MCF 10A (cell line): ENCODE measurements at regions of chr12 and their contacts with region 1.

Region 1: GRCh38 chr12:57904848-57905811 is 36.2 kb upstream of the ATP23 start:
- DNase-seq: peak; percentile 90
- H3K4me3 Mint-ChIP-seq: no peak overlapping the region
- H3K27ac Mint-ChIP-seq: no peak overlapping the region
- H3K4me1 Mint-ChIP-seq: peaks cover 8% of the 10 kb centered on the region
- H3K27me3 Mint-ChIP-seq: peaks cover 26% of the 10 kb centered on the region
- CTCF ChIP-seq: peak; percentile 100

Region 2: DNA sequence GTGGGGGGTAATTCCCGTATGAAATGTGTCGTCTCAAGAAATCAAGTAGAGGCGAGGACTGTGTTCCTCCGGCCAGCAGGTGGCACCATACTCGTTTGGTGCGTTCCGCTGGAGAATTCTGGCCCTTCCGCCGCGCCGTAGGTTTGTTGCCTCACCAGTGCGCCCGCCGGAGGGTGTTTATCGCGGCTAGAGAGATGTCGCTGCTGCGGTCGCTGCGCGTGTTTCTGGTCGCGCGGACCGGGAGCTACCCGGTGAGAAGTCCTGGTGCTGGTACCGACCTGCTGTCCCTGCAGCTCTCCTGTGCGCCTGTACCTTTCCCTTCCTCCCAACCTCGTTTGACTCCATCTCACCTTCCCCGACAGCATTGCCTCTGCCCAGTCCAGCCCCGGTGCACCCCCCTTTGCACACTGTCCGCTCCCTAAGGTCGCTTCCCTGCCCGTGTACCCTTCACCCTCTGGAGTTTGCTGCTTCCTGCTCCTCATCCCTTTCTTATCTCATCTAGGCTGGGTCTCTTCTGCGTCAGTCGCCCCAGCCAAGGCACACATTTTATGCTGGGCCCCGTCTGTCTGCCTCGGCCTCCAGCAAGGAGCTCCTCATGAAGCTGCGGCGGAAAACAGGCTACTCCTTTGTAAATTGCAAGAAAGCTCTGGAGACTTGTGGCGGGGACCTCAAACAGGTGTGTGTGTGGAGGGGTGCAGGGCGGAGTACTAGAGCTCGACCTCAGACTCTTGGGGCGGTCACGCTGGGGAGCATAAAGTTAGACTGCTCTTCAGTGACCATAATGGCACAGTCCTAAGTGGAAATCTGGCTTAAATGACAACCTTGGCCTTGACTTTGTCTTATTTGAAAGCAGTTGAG is 122.3 kb before region 1 on chr12 and contains the start of gene TSFM:
- CTCF ChIA-PET with region 1: interaction called, 6 read pairs
- POLR2A ChIA-PET with region 1: interaction called, 3 read pairs
- intact Hi-C with region 1: loop called (anchors 1 kb)
- DNase-seq: peak; percentile 95
- H3K4me3 Mint-ChIP-seq: peak within 1 kb of the TSS; percentile 98
- H3K27ac Mint-ChIP-seq: peak within 1 kb of the TSS; percentile 86
- H3K4me1 Mint-ChIP-seq: peaks cover 25% of the 10 kb centered on the region
- H3K27me3 Mint-ChIP-seq: no peaks in the 10 kb centered on the region
- CTCF ChIP-seq: peak; percentile 90
- total RNA-seq, gene TSFM: 28.4 and 32.6 TPM in 2 replicates

Region 3: DNA sequence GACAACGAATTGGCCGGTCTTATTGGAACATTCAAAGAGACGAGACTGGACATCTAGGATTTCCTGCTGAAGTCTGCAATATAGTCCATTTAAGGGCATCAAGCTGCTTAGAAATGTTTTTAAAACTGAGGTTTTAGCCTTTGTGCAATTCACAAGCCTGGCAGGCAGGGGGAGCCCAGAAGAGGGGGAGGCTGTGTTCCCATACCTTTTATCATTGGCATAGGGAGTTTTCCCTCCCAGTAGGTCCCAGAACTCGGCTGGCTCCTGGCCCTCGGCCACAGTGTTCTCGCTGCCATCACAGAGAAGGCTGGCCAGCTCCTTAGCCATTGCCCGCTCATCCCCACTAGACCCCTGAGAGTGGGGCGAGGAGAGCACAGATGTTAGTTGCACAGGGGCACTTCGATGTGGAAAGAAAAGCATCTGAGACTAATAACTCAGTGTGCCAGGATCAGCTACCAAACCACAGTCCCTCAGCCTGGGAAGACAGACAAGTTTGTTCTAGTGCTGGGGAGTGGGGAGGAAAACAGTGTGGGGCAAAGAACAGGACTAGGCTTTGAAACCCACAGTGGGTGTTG is 101.7 kb before region 1 on chr12:
- CTCF ChIA-PET with region 1: interaction called, 28 read pairs
- POLR2A ChIA-PET with region 1: interaction called, 5 read pairs
- intact Hi-C with region 1: loop called (anchors 1 kb)
- DNase-seq: peak; percentile 61
- H3K4me3 Mint-ChIP-seq: no peak overlapping the region
- H3K27ac Mint-ChIP-seq: no peak overlapping the region
- H3K4me1 Mint-ChIP-seq: no peaks in the 10 kb centered on the region
- H3K27me3 Mint-ChIP-seq: no peaks in the 10 kb centered on the region
- CTCF ChIP-seq: peak; percentile 84

Region 4: DNA sequence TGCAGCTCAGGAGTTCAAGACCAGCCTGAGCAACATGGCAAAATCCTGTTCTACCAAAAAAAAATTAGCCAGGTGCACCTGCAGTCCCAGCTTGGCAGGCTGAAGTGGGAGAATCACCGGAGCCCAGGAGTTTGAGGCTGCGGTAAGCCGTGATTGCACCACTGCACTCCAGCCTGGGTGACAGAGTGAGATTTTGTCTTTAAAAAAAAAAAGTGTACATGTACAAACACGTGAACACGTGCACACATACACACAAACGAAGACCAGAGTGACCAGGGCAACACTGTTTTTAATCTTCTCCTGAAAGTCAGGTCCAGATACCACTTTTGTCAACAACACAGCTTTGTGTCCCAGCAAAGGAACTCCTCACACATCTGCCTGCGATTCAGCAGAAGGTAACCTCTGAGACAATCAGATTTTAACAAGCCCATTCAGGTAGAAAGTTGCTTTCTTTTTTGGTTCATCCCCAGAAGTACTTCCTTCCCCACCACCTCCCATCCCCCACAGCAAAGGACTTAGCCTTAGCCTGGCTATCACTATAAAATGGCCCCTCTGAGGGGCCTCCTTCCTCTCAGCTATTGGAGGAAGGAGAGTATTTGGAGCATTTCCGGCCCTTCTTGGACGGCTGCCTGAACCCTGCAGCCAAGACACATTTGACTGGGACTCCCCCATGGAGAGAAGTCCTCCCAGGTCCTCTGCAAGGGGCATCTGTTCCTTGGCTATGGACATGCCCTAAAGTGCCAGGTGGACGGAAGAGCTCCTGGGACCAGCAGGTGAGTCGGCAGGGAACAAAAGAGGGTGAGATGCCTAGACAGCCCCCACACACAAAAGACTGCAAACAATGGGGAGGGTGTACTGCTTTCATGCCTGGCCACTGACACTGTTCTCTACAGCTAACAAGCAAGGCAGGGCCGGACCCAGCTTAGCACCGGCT is 68.4 kb before region 1 on chr12:
- CTCF ChIA-PET with region 1: interaction called, 138 read pairs
- POLR2A ChIA-PET with region 1: interaction called, 167 read pairs
- intact Hi-C with region 1: loop called (anchors 1 kb)
- DNase-seq: peak; percentile 60
- H3K4me3 Mint-ChIP-seq: peak overlapping the region; percentile 46
- H3K27ac Mint-ChIP-seq: peak overlapping the region; percentile 59
- H3K4me1 Mint-ChIP-seq: peaks cover 41% of the 10 kb centered on the region
- H3K27me3 Mint-ChIP-seq: no peaks in the 10 kb centered on the region
- CTCF ChIP-seq: no peak

Region 5: DNA sequence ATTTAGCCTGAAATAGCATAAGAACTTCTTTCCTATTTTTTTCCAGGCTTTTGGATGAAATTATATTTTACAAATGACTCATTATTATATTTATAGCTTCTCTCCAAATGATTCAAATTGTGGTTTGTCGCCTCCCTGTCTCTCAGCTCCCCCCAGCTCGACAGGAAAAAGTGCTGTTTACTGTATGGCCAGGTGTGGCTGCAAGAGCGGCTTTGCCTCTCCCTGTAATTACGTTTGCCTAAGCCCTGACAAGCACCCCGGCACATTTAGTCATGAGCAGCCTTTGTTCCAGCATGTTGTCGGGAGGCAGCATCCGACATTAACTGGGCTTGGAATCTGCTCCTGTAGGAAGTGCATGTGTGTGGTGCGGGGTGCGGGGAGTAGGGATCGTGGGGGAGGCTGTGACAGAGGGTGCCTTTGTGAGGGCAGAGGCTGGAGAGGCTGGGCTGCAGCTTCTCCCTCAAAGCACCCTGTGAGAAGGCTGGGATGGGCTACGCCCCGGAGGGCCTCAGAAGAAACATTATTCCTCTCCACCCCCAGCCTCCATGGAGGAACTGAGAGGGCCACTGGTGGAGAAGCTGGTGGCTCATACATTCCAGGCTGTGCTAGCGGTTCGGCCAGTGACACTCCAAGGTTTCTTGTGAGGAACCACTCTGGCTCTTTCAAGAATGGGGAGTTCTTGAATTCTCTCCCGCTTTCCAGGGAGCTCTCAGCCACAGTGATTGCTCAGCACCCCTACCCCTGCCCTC is 16.5 kb before region 1 on chr12:
- CTCF ChIA-PET with region 1: interaction called, 41 read pairs
- POLR2A ChIA-PET with region 1: interaction called, 9 read pairs
- intact Hi-C with region 1: no loop called
- DNase-seq: peak; percentile 90
- H3K4me3 Mint-ChIP-seq: peak overlapping the region; percentile 63
- H3K27ac Mint-ChIP-seq: peak overlapping the region; percentile 91
- H3K4me1 Mint-ChIP-seq: peaks cover 49% of the 10 kb centered on the region
- H3K27me3 Mint-ChIP-seq: no peaks in the 10 kb centered on the region
- CTCF ChIP-seq: no peak

Region 6: DNA sequence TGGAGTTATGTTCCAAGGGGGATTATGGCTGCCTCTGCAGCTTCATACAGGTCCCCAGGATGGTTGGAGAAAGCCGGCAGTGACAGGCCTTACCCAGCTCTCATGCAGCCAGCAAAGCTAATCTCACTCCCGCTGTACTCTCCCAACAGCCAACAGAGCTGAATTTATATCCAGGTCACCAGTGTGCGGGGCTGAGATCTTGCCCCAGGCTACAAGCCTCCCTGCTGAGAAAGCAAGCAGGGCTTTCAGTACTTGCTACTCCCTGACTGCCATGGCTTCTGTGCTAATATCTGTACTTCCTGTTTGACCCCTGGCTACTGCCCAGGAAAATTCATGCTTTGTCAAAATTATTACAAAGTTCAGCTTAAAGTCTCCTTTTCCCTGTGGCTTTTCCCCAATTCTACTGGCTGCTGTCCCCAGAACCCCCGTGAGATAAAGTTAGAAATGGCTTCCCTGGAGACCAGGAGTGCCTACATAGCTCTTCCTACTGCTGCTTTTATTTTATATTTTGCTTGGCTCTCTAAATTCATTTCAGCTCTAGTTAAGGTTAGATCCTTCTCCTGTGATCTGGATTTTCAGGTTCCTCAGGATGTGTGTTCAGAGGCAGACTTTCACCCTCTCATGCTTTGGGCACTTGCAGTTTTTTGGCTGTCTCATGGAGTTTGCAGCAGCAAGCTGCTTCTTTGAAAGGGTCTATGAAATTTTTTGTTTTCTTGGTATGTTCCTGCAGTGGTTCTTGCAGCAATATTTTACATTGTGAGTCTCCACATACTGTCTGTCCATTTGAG is 129.4 kb after region 1 on chr12:
- CTCF ChIA-PET with region 1: no interaction called
- POLR2A ChIA-PET with region 1: no interaction called
- intact Hi-C with region 1: no loop called
- DNase-seq: no peak
- H3K4me3 Mint-ChIP-seq: no peak overlapping the region
- H3K27ac Mint-ChIP-seq: no peak overlapping the region
- H3K4me1 Mint-ChIP-seq: peaks cover 19% of the 10 kb centered on the region
- H3K27me3 Mint-ChIP-seq: no peaks in the 10 kb centered on the region
- CTCF ChIP-seq: no peak